CD8-positive, alpha-beta T cell (primary cell): ENCODE measurements at regions of chr3 and their contacts with region 1.

Region 1: GRCh38 chr3:121749276-121750086 is at the start of gene GOLGB1:
- DNase-seq: peak; percentile 74 to 99 (median 90)
- ATAC-seq: peak; percentile 94
- H3K4me3 ChIP-seq: peak within 1 kb of the TSS; percentile 86 to 94
- H3K4me3 Mint-ChIP-seq: no peak within 1 kb of the TSS
- H3K27ac ChIP-seq: peak within 1 kb of the TSS; percentile 97 to 98
- H3K27ac Mint-ChIP-seq: no peak within 1 kb of the TSS
- H3K4me1 ChIP-seq: peaks cover 19% of the 10 kb centered on the region
- H3K4me1 Mint-ChIP-seq: peaks cover 14% of the 10 kb centered on the region
- H3K27me3 ChIP-seq: peaks cover 0 to 6% of the 10 kb centered on the region in 2 experiments
- H3K27me3 Mint-ChIP-seq: peaks cover 4% of the 10 kb centered on the region
- CTCF ChIP-seq: no peak
- total RNA-seq, gene GOLGB1: 47.4 to 53.9 TPM

Region 2: GRCh38 chr3:121681792-121682191 is 67.7 kb before region 1 on chr3:
- CTCF ChIA-PET with region 1: no interaction called
- POLR2A ChIA-PET with region 1: no interaction called
- intact Hi-C with region 1: no loop called
- DNase-seq: no peak
- ATAC-seq: no peak
- H3K4me3 ChIP-seq: no peak overlapping the region
- H3K4me3 Mint-ChIP-seq: no peak overlapping the region
- H3K27ac ChIP-seq: no peak overlapping the region
- H3K27ac Mint-ChIP-seq: no peak overlapping the region
- H3K4me1 ChIP-seq: no peaks in the 10 kb centered on the region
- H3K4me1 Mint-ChIP-seq: no peaks in the 10 kb centered on the region
- H3K27me3 ChIP-seq: no peaks in the 10 kb centered on the region
- H3K27me3 Mint-ChIP-seq: no peaks in the 10 kb centered on the region
- CTCF ChIP-seq: no peak

Region 3: DNA sequence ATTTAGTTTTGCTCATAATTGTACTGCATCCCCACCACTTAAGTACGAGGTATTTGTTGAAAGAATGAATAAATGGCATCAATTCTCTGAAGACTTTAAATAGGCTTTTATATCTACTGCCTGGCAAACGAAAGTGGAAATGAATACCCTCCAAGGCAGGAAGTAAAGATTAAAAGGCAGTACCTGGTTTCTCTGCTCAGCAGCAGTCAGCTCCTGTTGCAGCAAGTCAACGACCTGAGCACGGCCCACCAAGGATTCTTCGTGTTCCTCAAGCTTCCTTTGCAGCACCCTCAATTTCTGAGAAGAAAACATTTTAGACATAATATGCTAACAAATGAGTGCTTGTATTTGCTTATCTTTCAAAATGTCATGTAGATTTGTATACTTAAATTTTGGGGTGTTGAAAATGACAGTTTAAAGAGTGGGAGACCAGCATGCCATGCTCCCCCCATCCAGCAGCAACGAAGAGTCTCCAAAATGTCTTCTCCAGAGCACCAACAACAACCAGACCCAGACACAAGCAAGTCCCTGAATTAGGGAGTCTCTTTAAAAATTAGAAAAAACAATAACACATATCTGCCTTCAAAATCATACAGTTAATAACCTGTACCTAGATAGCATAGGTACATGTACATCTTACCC is 31.2 kb before region 1 on chr3:
- CTCF ChIA-PET with region 1: no interaction called
- POLR2A ChIA-PET with region 1: interaction called, 3 read pairs
- intact Hi-C with region 1: loop called in 1 of 2 experiments (anchors 2 kb)
- DNase-seq: peak in 7 of 9 experiments; percentile 1 to 64 (median 33)
- ATAC-seq: peak; percentile 99
- H3K4me3 ChIP-seq: peak overlapping the region in 1 of 2 experiments; percentile 14
- H3K4me3 Mint-ChIP-seq: peak overlapping the region; percentile 47
- H3K27ac ChIP-seq: peak overlapping the region; percentile 35 to 44
- H3K27ac Mint-ChIP-seq: peak overlapping the region; percentile 81
- H3K4me1 ChIP-seq: peaks cover 12% of the 10 kb centered on the region
- H3K4me1 Mint-ChIP-seq: peaks cover 19% of the 10 kb centered on the region
- H3K27me3 ChIP-seq: no peaks in the 10 kb centered on the region
- H3K27me3 Mint-ChIP-seq: no peaks in the 10 kb centered on the region
- CTCF ChIP-seq: no peak

Region 4: DNA sequence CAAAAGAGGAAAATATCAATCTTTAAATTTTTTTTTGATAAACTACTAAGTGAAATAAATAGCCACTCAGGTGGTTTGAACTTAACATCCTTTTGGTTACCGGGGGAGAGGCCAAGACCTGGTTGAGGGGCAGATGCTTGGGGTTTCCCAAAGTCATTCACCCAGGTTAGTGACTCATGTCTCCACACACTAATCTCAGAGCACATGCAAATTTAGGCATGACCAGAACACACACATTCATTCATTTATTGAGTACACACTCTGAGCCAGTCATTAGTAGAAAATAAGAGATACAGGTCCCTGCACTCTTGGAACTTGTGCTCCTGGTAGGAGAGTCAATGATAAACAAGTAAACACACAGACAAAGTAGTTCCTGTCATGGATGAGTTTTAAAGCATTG is 265.3 kb after region 1 on chr3:
- CTCF ChIA-PET with region 1: no interaction called
- POLR2A ChIA-PET with region 1: no interaction called
- intact Hi-C with region 1: no loop called
- DNase-seq: no peak
- ATAC-seq: no peak
- H3K4me3 ChIP-seq: no peak overlapping the region
- H3K4me3 Mint-ChIP-seq: no peak overlapping the region
- H3K27ac ChIP-seq: no peak overlapping the region
- H3K27ac Mint-ChIP-seq: no peak overlapping the region
- H3K4me1 ChIP-seq: no peaks in the 10 kb centered on the region
- H3K4me1 Mint-ChIP-seq: no peaks in the 10 kb centered on the region
- H3K27me3 ChIP-seq: no peaks in the 10 kb centered on the region
- H3K27me3 Mint-ChIP-seq: peaks cover 29% of the 10 kb centered on the region
- CTCF ChIP-seq: no peak

Region 5: GRCh38 chr3:122415720-122416654 is 666.5 kb after region 1 on chr3 and contains the start of gene WDR5B:
- CTCF ChIA-PET with region 1: no interaction called
- POLR2A ChIA-PET with region 1: no interaction called
- intact Hi-C with region 1: loop called (anchors 1 to 10 kb)
- DNase-seq: peak; percentile 97 to 99 (median 98)
- ATAC-seq: peak; percentile 88
- H3K4me3 ChIP-seq: peak within 1 kb of the TSS; percentile 71 to 76
- H3K4me3 Mint-ChIP-seq: peak within 1 kb of the TSS; percentile 97
- H3K27ac ChIP-seq: peak within 1 kb of the TSS; percentile 91 to 94
- H3K27ac Mint-ChIP-seq: peak within 1 kb of the TSS; percentile 100
- H3K4me1 ChIP-seq: peaks cover 26% of the 10 kb centered on the region
- H3K4me1 Mint-ChIP-seq: peaks cover 58% of the 10 kb centered on the region
- H3K27me3 ChIP-seq: no peaks in the 10 kb centered on the region
- H3K27me3 Mint-ChIP-seq: no peaks in the 10 kb centered on the region
- CTCF ChIP-seq: no peak
- total RNA-seq, gene WDR5B: 1.9 to 2.7 TPM